ENCODE measurements at regions of chr17 and their contacts with region 1.

Region 1: GRCh38 chr17:10115071-10115539 is 83.3 kb downstream of the GAS7 start:
- DNase-seq: peak; percentile 11 to 95 (median 81)
- H3K4me3 ChIP-seq: peak overlapping the region in 52 of 59 donors; percentile 1 to 61 (median 37)
- H3K27ac ChIP-seq: peak overlapping the region; percentile 21 to 94 (median 87)
- H3K27me3 ChIP-seq: no peaks in the 10 kb centered on the region
- CTCF ChIP-seq: peak in 15 of 56 donors; percentile 9 to 35 (median 21)

Region 2: DNA sequence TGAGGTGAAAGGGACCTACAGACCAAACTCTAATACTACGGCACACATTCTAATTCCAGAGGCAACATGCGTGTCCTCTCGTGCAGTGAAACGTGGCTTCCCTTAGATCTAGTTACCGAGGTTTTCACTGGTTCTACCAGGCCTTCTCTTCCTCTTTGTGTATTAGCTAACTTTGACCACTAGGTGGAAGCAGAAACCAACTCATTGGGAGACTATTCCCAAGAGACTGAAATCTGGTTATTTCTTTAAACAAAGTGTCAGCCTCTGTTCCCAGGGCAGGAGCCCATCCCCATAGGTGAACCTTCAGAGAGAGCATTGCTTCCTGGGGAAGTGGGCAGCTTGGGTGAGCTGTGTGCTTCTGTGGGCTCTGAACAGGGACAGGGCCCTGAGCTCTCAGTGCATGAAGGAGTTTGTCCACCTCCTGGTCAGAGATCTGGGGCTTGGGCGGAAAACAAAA is 190.3 kb before region 1 on chr17:
- intact Hi-C with region 1: loop called in 1 of 2 experiments (anchors 5 kb)
- DNase-seq: no peak
- H3K4me3 ChIP-seq: no peak overlapping the region
- H3K27ac ChIP-seq: peak overlapping the region in 46 of 59 donors; percentile 2 to 77 (median 54)
- H3K27me3 ChIP-seq: no peaks in the 10 kb centered on the region
- CTCF ChIP-seq: peak; percentile 67 to 97 (median 90)

Region 3: DNA sequence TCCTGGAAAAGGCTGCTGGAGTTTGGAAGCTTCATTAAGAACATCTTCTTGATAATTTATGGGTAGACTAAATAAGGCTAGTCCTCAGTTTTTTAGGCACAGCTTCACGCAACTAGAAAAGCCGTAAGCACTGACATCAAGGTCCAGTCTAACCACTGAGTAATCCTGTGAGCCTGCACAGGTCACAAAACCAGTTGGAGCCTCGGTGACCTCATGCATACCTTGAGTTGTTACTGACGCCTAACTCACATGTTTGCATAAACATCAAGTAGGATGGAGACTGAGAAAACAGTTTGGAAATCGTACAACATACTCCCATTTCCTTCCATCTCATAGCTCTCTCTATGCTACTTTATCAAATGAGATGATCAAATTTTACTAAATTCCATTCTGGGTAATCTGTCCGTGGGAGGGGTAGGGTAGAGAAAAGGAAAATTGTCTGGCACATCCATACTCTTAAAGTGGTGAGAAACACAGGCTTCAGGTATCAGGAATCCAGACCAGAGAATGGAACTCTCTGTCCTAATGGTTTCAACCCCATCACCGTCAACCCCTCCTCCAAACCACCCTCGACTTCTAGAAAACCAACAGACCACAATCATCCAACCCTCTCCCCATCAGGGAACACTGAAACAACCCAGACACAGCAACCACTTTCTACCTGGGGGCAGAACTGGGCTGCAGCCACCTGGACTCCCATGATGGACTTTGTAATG is 146.0 kb before region 1 on chr17:
- intact Hi-C with region 1: loop called (anchors 5 kb)
- DNase-seq: no peak
- H3K4me3 ChIP-seq: no peak overlapping the region
- H3K27ac ChIP-seq: peak overlapping the region in 22 of 59 donors; percentile 7 to 69 (median 44)
- H3K27me3 ChIP-seq: no peaks in the 10 kb centered on the region
- CTCF ChIP-seq: no peak

Region 4: GRCh38 chr17:10050597-10051101 is 64.5 kb before region 1 on chr17:
- intact Hi-C with region 1: loop called (anchors 5 kb)
- DNase-seq: no peak
- H3K4me3 ChIP-seq: no peak overlapping the region
- H3K27ac ChIP-seq: peak overlapping the region in 44 of 59 donors; percentile 2 to 99 (median 51)
- H3K27me3 ChIP-seq: no peaks in the 10 kb centered on the region
- CTCF ChIP-seq: no peak

Region 5: GRCh38 chr17:10198509-10199253 is 83.6 kb after region 1 on chr17 and contains the start of gene GAS7:
- intact Hi-C with region 1: loop called in 1 of 2 experiments (anchors 5 kb)
- DNase-seq: peak in 6 of 10 donors; percentile 43 to 70 (median 57)
- H3K4me3 ChIP-seq: peak within 1 kb of the TSS; percentile 49 to 85 (median 73)
- H3K27ac ChIP-seq: peak within 1 kb of the TSS in 28 of 59 donors; percentile 5 to 75 (median 38)
- H3K27me3 ChIP-seq: peaks cover 0 to 8% (median 0%) of the 10 kb centered on the region in 45 donors
- CTCF ChIP-seq: peak in 4 of 56 donors; percentile 3 to 15 (median 12)
- total RNA-seq, gene GAS7: 226 to 644 (median 478) TPM

Region 6: DNA sequence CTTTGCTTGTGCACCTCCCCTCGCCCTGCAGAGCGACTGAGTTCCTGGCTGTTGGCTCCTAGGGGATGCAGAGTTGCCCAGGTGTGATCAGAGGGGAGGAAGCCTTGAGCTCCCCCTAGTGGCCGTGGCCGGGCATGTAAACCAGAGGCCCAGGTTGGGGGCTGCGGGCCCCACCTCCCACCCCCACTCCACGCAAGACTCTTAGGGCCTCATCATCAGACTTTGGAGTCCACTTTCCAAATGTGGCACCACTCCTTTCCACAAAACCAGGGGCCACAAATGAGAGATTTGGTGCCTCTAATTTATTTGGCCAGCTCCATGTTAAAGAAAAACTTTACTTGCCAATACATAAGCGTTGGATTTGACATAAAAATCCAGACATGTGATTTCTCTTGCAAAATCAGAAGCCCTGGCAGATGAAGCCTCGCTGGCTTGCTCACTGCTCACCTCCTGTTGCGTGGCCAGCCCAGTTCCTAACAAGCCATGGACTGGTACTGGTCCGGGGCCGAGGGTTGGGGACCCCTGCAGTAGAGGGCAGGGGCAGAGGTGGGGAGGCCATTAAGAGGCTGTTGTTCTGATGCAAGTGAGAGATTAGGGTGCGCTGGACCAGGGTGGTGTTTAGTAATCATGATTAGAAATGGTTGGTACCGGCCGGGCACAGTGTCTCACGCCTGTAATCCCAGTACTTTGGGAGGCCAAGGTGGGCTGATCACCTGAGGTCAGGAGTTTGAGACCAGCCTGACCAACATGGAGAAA is 112.0 kb after region 1 on chr17:
- intact Hi-C with region 1: loop called (anchors 5 kb)
- DNase-seq: peak in 8 of 10 donors; percentile 46 to 68 (median 50)
- H3K4me3 ChIP-seq: no peak overlapping the region
- H3K27ac ChIP-seq: peak overlapping the region in 3 of 59 donors; percentile 3 to 84 (median 18)
- H3K27me3 ChIP-seq: no peaks in the 10 kb centered on the region
- CTCF ChIP-seq: peak; percentile 47 to 95 (median 83)

Region 7: GRCh38 chr17:10618202-10618635 is 503.1 kb after region 1 on chr17:
- intact Hi-C with region 1: loop called in 1 of 2 experiments (anchors 10 kb)
- DNase-seq: peak; percentile 30 to 83 (median 66)
- H3K4me3 ChIP-seq: peak overlapping the region in 18 of 59 donors; percentile 2 to 43 (median 30)
- H3K27ac ChIP-seq: peak overlapping the region in 3 of 59 donors; percentile 6 to 49 (median 36)
- H3K27me3 ChIP-seq: no peaks in the 10 kb centered on the region
- CTCF ChIP-seq: peak; percentile 39 to 96 (median 84)